ENCODE measurements at regions of chr19 and their contacts with region 1.

Region 1: GRCh38 chr19:9934132-9934950 is 2.0 kb downstream of the OLFM2 start:
- DNase-seq: peak; percentile 38 to 92 (median 84)
- ATAC-seq: peak; percentile 66 to 92 (median 88)
- H3K4me3 ChIP-seq: no peak overlapping the region
- H3K27ac ChIP-seq: no peak overlapping the region
- H3K4me1 ChIP-seq: peaks cover 0 to 4% (median 0%) of the 10 kb centered on the region in 3 donors
- H3K27me3 ChIP-seq: no peaks in the 10 kb centered on the region
- CTCF ChIP-seq: peak; percentile 64 to 87 (median 80)

Region 2: DNA sequence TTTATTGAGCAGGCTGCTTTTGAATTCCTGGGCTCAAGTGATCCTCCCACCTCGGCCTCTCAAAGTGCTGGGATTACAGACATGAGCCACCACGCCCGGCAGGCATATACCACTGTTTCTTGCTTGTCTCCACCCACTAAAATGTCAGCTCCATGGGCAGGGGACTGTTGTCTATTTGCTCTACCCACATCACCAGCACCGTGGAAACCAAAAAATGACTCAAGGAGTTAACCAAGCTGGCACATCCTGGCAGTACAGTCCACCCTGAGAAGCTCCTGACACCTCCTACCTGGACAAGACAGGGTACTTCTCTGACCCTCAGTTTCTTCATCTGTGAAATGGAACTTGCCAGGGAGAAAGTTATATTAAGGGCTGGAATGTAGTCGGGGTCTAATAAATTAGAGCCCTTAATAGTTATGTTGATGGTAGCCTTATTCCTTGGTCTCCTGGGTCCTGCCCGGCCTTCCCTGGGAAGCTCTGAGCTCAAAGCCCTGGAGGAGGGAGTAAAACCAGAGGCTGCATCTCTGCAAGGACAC is 92.9 kb after region 1 on chr19:
- intact Hi-C with region 1: loop called in 2 of 3 experiments (anchors 5 to 10 kb)
- DNase-seq: no peak
- ATAC-seq: peak in 1 of 4 donors; percentile 4
- H3K4me3 ChIP-seq: no peak overlapping the region
- H3K27ac ChIP-seq: no peak overlapping the region
- H3K4me1 ChIP-seq: no peaks in the 10 kb centered on the region
- H3K27me3 ChIP-seq: no peaks in the 10 kb centered on the region
- CTCF ChIP-seq: no peak

Region 3: GRCh38 chr19:10033614-10034013 is 99.3 kb after region 1 on chr19:
- intact Hi-C with region 1: loop called in 2 of 3 experiments (anchors 5 to 10 kb)
- DNase-seq: no peak
- ATAC-seq: no peak
- H3K4me3 ChIP-seq: no peak overlapping the region
- H3K27ac ChIP-seq: no peak overlapping the region
- H3K4me1 ChIP-seq: peaks cover 0 to 14% (median 0%) of the 10 kb centered on the region in 3 donors
- H3K27me3 ChIP-seq: no peaks in the 10 kb centered on the region
- CTCF ChIP-seq: no peak

Region 4: DNA sequence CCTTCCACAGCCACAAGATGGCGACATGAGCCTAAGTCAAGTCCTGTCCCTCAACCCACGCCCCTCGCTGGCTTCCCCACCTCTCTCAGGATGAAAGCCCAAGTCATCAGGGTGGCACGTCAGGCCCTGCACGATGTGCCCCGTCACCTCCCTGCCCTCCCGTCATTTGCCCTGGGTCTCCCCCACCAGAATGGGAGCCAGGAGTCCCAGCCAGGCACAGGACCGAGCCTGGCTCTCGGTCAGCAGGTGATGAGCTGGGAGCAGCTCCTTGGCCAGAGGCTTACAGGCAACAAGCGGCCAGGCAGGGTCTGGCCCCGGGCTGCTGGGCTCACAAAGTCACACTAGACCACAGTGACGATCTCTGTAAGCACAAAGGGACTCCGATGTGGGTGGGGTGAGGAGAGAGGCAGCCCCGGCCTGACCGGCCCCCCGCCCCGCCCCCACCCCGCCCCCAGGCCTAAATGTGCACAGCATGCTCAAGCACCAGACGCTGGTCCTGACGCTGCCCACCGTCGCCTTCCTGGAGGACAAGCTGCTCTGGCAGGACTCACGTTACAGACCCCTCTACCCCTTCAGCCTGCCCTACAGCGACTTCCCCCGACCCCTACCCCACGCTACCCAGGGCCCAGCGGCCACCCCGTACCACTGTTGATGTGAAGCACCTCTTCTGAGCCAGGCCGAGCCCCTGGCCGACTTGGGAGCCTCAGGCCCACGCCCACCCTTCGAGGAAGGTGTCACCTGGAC is 325.0 kb after region 1 on chr19:
- intact Hi-C with region 1: loop called in 1 of 3 experiments (anchors 5 kb)
- DNase-seq: peak; percentile 75 to 88 (median 83)
- ATAC-seq: peak; percentile 56 to 85 (median 77)
- H3K4me3 ChIP-seq: no peak overlapping the region
- H3K27ac ChIP-seq: peak overlapping the region in 2 of 4 donors; percentile 4 to 27
- H3K4me1 ChIP-seq: no peaks in the 10 kb centered on the region
- H3K27me3 ChIP-seq: no peaks in the 10 kb centered on the region
- CTCF ChIP-seq: peak in 3 of 4 donors; percentile 56 to 68 (median 59)

Region 5: DNA sequence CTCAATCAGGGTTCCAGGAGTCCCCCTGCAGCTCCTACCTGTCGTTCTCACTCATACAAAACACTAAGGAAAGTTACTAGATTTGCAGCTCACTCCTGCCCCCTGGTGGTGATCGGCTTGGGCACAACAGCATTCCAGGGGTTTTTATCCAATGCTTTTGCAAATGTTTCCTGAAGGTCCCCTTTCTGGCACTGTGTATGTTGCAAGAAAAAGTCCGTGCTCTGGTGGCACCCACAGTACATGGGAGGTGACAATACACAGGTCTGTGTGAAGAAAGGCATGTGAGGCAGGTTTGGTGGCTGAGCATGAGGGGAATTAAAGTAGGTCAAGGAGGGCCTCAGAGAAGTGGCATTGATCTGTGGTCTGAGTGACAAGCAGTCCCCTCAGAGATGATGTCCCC is 454.6 kb after region 1 on chr19:
- intact Hi-C with region 1: loop called in 2 of 3 experiments (anchors 10 kb)
- DNase-seq: peak; percentile 72 to 98 (median 88)
- ATAC-seq: peak; percentile 67 to 87 (median 84)
- H3K4me3 ChIP-seq: no peak overlapping the region
- H3K27ac ChIP-seq: no peak overlapping the region
- H3K4me1 ChIP-seq: no peaks in the 10 kb centered on the region
- H3K27me3 ChIP-seq: no peaks in the 10 kb centered on the region
- CTCF ChIP-seq: peak; percentile 84 to 92 (median 90)

Measured in pancreas (tissue), 10 donors.